Aorta (tissue), 5 donors: ENCODE measurements at regions of chr4 and their contacts with region 1.

Region 1: GRCh38 chr4:28378109-28378830 is 1517.6 kb downstream of the STIM2 start:
- DNase-seq: no peak
- ATAC-seq: no peak
- H3K4me3 ChIP-seq: no peak overlapping the region
- H3K27ac ChIP-seq: no peak overlapping the region
- H3K4me1 ChIP-seq: no peaks in the 10 kb centered on the region
- H3K27me3 ChIP-seq: no peaks in the 10 kb centered on the region

Region 2: GRCh38 chr4:28354880-28355656 is 23.2 kb before region 1 on chr4:
- intact Hi-C with region 1: loop called in 1 of 2 experiments (anchors 2 kb)
- DNase-seq: no peak
- ATAC-seq: no peak
- H3K4me3 ChIP-seq: no peak overlapping the region
- H3K27ac ChIP-seq: no peak overlapping the region
- H3K4me1 ChIP-seq: no peaks in the 10 kb centered on the region
- H3K27me3 ChIP-seq: no peaks in the 10 kb centered on the region